ENCODE measurements at regions of chr4 and their contacts with region 1.

Region 1: GRCh38 chr4:38582889-38583470 is 81.0 kb upstream of the KLF3 start:
- DNase-seq: peak; percentile 9

Region 2: DNA sequence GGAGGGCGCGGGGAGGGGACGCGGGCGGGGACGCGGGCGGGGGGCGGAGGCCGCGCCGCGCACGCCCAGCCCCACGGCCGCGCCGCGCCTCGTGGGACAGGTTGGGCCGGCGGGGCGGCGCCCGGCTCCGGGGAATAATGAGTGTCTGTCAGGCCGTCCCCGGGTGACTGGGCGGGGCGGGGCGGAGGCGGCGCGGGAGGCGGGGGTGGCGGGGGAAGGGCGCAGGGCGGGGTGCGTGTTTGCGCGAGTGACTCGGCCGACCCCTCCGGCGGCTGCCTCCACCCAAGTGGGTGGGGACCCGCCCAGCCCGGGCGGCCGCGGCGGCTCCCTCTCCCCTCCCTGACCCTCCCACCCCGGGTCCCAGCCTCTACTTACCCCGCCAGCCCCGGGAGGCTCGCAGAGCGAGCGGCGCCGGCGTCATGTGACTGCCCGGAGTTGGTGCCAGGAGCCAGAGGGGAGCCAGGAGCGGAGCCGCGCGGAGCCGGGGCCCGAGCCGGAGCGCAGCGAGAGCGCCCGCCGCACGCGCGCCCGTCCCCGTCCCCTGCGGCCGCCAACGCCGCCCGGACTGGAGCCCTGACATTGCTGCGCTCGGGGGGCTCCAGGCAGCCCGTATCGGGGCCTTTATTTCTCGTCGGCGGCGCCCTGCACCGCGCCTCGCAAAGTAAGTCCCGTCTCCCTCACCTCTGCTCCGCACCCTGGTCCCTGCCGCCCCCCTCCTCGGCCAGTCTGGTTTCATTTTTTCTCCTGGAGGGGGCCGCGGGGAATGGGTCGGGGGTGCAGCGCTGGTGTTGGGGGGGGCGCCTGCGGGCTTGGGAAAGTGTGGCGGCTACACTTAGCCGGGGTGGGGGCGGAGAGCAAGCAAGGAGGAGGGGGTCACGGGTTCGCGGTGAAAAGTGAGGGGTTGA is 81.1 kb after region 1 on chr4 and contains the start of gene KLF3:
- in situ Hi-C with region 1: loop called (anchors 10 kb)
- DNase-seq: peak; percentile 73
- total RNA-seq, gene KLF3: 3.0 and 5.1 TPM in 2 replicates